ENCODE measurements at regions of chr21 and their contacts with region 1.

Region 1: DNA sequence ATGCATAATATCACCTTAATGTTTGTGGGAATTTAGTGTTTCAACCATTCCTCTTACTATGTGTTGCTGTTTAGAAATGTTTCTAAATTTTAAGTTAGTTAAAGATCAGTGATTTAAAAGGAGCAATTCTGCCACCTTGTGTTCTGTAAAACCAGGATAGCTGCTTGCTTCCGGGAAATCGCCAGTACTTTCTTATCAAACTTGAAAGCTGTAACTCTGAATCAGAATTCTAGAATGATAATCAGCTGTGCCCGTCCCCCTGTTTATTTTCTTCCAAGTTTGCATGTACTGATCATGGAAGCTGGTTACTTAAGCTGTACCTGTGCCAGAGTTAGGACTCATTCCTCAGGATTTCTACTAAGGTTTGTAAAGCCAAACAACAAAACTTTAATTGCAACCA is 656.4 kb downstream of the LTN1 start:
- DNase-seq: peak in 1 of 10 donors; percentile 14
- H3K4me3 ChIP-seq: peak overlapping the region in 1 of 59 donors; percentile 38
- H3K27ac ChIP-seq: peak overlapping the region in 52 of 59 donors; percentile 9 to 99 (median 94)
- H3K27me3 ChIP-seq: no peaks in the 10 kb centered on the region
- CTCF ChIP-seq: peak; percentile 30 to 89 (median 68)

Region 2: DNA sequence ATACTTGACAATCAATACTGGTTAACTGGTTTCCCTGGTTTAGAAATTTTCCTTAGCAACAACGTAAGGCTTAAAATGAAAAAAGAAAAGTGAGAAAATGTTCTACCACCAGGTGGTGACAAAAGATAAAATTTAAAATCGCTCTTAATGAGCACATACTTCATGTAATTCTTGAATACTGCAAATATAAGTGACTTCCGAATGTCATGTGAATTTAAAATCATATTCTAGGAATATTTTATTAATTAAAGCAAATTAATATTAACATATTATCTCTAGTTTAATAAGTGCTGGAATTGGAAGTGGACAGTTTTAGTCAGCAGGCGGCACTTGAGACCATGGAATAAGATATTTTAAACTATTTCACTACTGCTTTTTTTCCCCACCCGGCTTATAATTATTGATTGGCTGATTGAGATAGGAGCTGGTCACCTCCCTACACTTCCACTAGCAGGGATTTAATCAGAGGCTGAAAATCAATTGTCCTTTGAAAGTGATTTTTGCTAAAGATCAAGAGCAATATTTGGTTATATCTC is 1486.1 kb before region 1 on chr21:
- intact Hi-C with region 1: loop called (anchors 2 to 5 kb)
- DNase-seq: no peak
- H3K4me3 ChIP-seq: peak overlapping the region in 47 of 59 donors; percentile 2 to 53 (median 25)
- H3K27ac ChIP-seq: peak overlapping the region in 27 of 59 donors; percentile 9 to 100 (median 55)
- H3K27me3 ChIP-seq: no peaks in the 10 kb centered on the region
- CTCF ChIP-seq: peak; percentile 70 to 98 (median 85)

Region 3: DNA sequence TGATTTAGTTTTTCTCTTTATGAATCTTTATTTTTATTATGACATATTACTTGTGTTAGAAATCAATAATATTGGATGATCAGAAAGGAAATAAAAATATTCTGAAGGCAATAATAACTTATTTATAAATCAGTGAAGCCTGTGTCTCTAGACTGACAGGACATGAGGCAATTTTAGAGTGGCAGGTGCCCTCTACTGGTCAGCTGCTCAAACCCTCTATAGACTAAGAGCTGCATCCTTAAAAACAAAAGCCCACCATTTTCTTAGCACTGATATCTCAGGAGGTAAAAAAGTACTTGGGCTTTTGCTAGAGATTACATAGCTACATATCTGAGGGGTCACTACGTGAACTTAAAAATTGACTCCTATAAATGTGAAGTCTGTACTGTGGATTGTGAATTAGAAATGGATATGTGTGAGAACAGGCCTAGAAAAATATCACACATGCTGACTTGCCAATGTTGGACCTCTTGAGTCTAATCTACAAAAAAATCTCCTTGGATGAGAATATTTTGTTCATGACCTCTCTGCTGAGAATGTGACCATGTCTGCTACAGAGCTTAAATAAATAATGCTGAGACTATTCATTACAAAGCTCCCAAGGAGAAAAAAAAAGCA is 771.5 kb before region 1 on chr21:
- intact Hi-C with region 1: loop called in 1 of 2 experiments (anchors 10 kb)
- DNase-seq: peak in 7 of 10 donors; percentile 21 to 64 (median 49)
- H3K4me3 ChIP-seq: no peak overlapping the region
- H3K27ac ChIP-seq: no peak overlapping the region
- H3K27me3 ChIP-seq: no peaks in the 10 kb centered on the region
- CTCF ChIP-seq: peak; percentile 17 to 82 (median 68)

Region 4: DNA sequence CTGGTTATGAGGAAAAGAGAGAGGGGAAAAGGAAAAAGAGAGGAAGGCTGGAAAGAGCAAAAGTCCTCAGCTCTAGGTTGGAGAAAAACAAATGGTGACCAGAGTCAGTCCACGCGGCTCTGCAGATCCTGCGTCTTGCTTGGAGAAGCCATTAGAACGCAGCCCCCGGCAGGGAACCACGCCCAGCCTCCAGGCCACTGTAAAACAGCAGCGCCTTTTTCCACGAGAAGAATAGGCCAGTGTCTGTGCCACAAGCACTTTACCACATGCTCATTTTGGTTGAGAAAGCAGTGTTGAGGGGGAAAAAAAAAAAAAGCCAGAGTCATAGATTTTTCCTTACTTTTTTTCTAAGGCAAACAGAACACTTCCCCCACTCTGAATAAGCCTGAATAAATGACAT is 522.6 kb before region 1 on chr21:
- intact Hi-C with region 1: loop called in 1 of 2 experiments (anchors 10 kb)
- DNase-seq: peak; percentile 4 to 93 (median 86)
- H3K4me3 ChIP-seq: peak overlapping the region in 13 of 59 donors; percentile 4 to 43 (median 21)
- H3K27ac ChIP-seq: peak overlapping the region; percentile 23 to 97 (median 88)
- H3K27me3 ChIP-seq: no peaks in the 10 kb centered on the region
- CTCF ChIP-seq: peak in 11 of 56 donors; percentile 7 to 46 (median 25)

Region 5: GRCh38 chr21:28220680-28221079 is 115.6 kb before region 1 on chr21:
- intact Hi-C with region 1: loop called in 1 of 2 experiments (anchors 5 kb)
- DNase-seq: no peak
- H3K4me3 ChIP-seq: no peak overlapping the region
- H3K27ac ChIP-seq: peak overlapping the region in 15 of 59 donors; percentile 1 to 69 (median 21)
- H3K27me3 ChIP-seq: no peaks in the 10 kb centered on the region
- CTCF ChIP-seq: no peak